Endothelial cell of umbilical vein (primary cell): ENCODE measurements at regions of chr5 and their contacts with region 1.

Region 1: DNA sequence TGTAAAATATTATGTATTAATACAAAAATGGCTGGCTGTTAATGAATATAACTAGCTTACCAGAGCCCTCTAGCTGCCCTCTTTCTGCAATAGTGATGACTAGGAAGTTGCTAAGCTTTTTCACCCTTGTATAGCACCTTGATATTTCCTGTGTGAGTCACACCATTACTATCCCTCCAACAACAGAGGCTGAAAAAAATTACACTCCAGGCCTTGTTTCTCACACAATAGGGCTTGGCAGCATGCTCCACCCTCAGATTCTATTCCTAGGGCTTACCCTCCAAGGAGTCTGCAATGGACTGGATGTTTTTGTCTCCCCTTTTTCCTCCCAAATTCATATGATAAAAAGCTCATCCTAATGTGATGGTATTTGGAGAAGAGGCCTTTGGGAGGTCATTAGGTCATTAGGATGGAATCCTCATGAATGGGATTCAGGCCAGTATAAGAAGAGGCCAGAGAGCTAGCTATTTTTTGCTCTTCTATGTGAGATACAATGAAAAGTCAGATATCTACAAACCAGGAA is 184.6 kb upstream of the MAP1B start:
- DNase-seq: peak; percentile 87
- H3K4me3 ChIP-seq: no peak overlapping the region
- H3K27ac ChIP-seq: peak overlapping the region; percentile 41
- H3K4me1 ChIP-seq: peaks cover 23% of the 10 kb centered on the region
- H3K27me3 ChIP-seq: peaks cover 0 to 14% of the 10 kb centered on the region in 2 experiments
- CTCF ChIP-seq: no peak
- POLR2A ChIP-seq: no peak

Region 2: GRCh38 chr5:71932655-71933338 is 10.2 kb after region 1 on chr5:
- CTCF ChIA-PET with region 1: interaction called, 14 read pairs
- POLR2A ChIA-PET with region 1: no interaction called
- dilution Hi-C with region 1: no loop called
- intact Hi-C with region 1: loop called (anchors 1 kb)
- DNase-seq: peak; percentile 92
- H3K4me3 ChIP-seq: no peak overlapping the region
- H3K27ac ChIP-seq: peak overlapping the region; percentile 88
- H3K4me1 ChIP-seq: peaks cover 22% of the 10 kb centered on the region
- H3K27me3 ChIP-seq: peaks cover 4 to 7% of the 10 kb centered on the region in 2 experiments
- CTCF ChIP-seq: peak in 1 of 2 donors; percentile 2
- POLR2A ChIP-seq: no peak

Region 3: DNA sequence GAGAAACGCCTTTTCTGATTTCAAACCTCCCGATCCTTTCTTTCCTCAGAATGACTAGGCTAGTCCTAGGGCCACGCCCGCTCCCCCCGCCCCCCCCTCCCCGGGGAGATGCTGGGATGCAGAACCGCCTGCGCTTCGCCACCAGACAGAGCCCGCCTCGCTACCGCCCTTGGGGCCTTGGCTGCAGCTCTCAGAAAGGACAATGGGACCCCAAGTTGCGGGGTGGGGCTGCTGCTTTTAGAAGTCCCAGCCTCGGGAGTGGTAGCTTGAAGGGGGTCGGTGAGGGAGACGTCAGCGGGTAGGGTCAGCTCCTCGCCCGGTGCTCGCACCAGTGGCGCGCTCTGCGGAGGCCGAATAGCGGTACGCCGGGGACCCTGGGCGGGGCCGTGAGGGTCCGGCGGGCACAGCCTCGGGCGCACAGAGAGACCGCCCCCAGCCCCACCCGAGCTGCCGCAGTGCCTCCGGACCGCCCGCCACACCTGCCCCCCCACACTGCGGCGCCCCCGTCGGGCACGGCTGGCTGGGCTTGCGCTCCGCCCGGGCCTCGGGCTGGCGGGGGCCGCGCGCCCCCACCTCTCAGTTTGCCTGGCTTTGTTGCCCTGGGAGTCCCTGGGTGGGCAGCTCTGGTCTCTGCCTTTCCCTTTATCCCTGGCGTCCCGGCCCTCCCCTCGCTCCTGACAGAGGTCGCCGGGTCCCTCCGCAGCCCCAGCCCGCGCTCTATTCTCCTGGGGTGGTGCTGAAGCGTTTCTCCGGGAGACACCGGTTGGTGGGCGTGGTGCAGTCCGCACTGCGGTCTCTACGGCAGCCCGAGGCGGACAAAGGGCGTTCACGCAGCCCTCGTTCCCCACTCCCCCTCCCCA is 185.8 kb after region 1 on chr5:
- CTCF ChIA-PET with region 1: no interaction called
- POLR2A ChIA-PET with region 1: no interaction called
- dilution Hi-C with region 1: no loop called
- intact Hi-C with region 1: loop called (anchors 5 kb)
- DNase-seq: peak; percentile 81
- H3K4me3 ChIP-seq: peak overlapping the region; percentile 91 to 98 (median 97)
- H3K27ac ChIP-seq: peak overlapping the region; percentile 48
- H3K4me1 ChIP-seq: peaks cover 39% of the 10 kb centered on the region
- H3K27me3 ChIP-seq: no peaks in the 10 kb centered on the region
- CTCF ChIP-seq: no peak
- POLR2A ChIP-seq: peak; percentile 53